ENCODE measurements at regions of chr4 and their contacts with region 1.

Region 1: DNA sequence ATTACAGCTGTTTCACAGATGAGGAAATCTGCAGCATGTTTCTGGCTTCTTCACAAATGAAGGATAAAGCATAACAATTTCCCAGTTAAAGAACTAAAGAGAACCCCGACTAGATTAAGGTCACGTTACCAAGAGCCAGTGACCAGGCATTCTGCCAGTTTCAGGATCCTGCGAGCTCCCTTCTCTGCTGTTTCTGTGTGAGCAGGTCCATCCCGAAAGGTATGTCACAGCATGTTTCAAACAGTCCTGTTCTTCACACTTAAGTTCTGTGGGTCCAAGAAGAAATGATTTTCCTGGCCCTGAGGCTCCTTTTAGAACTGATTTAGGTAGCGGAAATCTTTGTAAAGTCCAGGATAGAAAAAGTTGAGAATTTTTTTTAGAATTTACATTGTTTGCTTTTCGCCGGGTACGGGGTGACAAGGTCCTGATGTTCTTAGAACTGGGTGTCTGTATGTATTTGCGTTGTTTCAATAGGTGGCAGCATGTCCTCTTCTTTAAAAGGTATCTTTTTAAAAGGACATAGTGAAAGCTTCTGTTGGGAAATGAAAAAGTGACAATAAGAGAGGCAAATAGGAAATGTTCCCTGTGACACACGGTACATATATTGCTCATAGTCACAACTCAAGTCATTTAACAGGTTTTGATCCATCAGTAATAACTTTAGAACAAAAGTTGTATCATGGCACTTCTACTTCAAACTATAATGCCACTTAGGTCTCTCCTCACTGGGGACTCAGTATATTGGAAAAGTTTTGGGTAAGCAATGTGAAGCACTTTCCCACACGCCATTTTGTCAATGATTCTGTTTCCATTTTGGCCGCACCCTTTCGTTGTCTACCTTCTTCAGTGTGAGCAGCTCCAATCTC is 18.4 kb downstream of the IL21 start:
- DNase-seq: peak; percentile 44
- H3K4me3 Mint-ChIP-seq: peak overlapping the region; percentile 48
- H3K27ac Mint-ChIP-seq: peak overlapping the region; percentile 79
- H3K4me1 Mint-ChIP-seq: peaks cover 43% of the 10 kb centered on the region
- H3K27me3 Mint-ChIP-seq: no peaks in the 10 kb centered on the region

Region 2: DNA sequence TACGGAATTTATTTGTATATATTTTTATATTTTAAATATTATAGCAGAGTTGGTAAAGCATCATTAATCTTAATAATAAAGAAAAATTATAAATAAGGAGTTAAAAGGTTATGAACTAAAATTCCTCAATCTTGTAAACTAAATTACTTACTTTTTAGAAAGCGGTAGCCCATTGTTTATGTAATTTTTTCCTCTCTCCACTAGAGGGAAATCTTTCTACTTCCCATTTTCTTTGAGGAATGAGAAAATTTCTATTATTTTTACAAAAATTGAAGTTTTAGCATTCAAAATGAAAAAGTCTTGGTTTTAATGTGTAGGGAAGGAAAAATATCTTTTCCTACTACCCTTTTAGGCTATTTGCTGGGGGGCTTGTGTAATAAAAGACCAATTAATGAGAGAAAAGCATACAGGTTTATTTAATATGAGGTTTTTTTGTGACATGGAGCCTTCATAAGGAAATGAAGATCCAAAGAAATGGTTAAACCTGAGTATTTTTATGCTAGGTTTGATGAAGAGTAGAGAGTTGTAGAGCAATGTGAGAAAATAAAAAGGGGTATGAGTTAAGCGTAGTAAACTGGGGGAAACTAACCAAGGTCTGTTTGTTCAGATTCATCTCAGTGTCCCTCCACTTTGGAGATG is 292.4 kb before region 1 on chr4:
- CTCF ChIA-PET with region 1: no interaction called
- intact Hi-C with region 1: loop called (anchors 1 kb)
- DNase-seq: no peak
- H3K4me3 Mint-ChIP-seq: no peak overlapping the region
- H3K27ac Mint-ChIP-seq: peak overlapping the region; percentile 57
- H3K4me1 Mint-ChIP-seq: peaks cover 8% of the 10 kb centered on the region
- H3K27me3 Mint-ChIP-seq: no peaks in the 10 kb centered on the region

Region 3: DNA sequence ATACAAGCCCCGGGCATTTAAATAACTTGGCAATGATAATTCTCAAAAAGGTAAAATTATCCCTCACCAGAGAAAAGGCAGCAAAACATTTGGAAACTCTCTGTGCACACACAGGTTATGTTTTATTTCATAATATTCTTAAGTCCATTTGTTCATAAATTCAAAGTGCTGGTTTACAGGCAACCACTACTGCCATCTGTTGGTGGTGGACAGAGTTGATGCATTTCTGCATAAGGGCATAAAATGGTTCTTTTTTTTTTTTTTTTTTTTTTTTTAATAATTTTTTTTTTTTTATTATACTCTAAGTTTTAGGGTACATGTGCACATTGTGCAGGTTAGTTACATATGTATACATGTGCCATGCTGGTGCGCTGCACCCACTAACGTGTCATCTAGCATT is 49.9 kb after region 1 on chr4:
- CTCF ChIA-PET with region 1: interaction called, 29 read pairs
- intact Hi-C with region 1: loop called (anchors 5 kb)
- DNase-seq: peak; percentile 88
- H3K4me3 Mint-ChIP-seq: no peak overlapping the region
- H3K27ac Mint-ChIP-seq: peak overlapping the region; percentile 31
- H3K4me1 Mint-ChIP-seq: peaks cover 13% of the 10 kb centered on the region
- H3K27me3 Mint-ChIP-seq: no peaks in the 10 kb centered on the region

Region 4: DNA sequence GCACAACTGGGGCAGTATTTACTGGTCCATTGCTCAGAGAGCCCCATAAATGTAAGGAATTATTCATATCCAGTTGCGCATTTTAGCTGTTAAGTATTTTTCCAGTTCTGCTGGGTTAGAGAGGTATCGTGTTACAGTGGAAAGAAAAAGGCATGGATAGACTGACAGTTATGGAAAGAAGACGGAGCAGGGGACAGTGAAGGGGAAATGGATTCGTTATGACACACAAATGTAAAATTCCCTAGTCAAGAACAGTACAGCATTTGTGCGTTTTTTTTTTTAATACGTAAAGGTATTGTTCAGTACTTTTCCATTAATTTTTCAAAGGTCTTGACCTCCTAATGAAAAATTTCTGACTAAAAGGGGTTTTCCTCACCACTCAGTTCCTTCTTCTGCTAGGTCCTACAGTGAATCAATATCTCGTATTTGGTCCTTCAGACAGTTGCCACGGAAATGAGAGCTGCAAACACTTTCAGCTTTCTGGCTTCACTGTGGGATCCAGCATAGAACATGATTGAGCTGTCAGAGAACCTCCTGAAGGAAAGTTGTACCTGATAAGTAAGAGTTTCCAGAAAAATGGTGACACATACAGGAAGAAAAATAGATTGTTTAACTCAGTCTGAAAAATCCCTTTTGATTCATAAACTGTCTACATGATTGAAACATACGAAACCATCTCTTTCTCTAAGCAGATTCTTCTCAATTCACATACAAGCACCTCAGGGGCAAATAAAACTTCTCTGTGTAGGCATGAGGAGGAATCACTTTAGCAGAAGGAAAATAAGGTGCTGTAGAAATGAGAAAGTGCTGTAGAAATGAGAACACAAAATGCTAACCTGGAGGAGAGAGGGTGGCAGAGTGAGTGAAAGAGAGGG is 108.2 kb after region 1 on chr4:
- CTCF ChIA-PET with region 1: interaction called, 92 read pairs
- intact Hi-C with region 1: loop called (anchors 1 kb)
- DNase-seq: peak; percentile 79
- H3K4me3 Mint-ChIP-seq: peak overlapping the region; percentile 54
- H3K27ac Mint-ChIP-seq: peak overlapping the region; percentile 96
- H3K4me1 Mint-ChIP-seq: peaks cover 80% of the 10 kb centered on the region
- H3K27me3 Mint-ChIP-seq: no peaks in the 10 kb centered on the region

Region 5: GRCh38 chr4:122764821-122765215 is 162.3 kb after region 1 on chr4:
- CTCF ChIA-PET with region 1: no interaction called
- intact Hi-C with region 1: loop called (anchors 1 kb)
- DNase-seq: no peak
- H3K4me3 Mint-ChIP-seq: no peak overlapping the region
- H3K27ac Mint-ChIP-seq: peak overlapping the region; percentile 50
- H3K4me1 Mint-ChIP-seq: peaks cover 30% of the 10 kb centered on the region
- H3K27me3 Mint-ChIP-seq: no peaks in the 10 kb centered on the region

Region 6: DNA sequence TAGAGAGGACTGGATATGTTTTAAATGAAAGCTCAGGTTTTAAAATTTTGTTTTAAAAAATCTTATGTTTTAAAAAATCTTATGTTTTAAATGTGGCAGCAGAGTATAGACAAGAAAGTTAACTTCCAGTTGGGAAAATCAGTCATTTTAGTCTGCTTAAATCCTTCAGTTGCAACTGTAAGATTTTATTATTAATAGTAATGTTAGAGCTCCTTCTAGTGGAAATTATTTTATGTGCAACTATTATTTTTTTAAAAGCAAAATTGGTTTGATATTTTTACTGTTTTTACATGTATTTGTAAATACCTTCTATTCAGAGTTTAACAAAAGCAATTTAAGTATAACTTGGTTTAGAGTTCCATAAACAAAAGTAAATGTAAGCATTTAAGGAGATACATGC is 328.4 kb after region 1 on chr4:
- CTCF ChIA-PET with region 1: interaction called, 20 read pairs
- intact Hi-C with region 1: loop called (anchors 1 kb)
- DNase-seq: no peak
- H3K4me3 Mint-ChIP-seq: no peak overlapping the region
- H3K27ac Mint-ChIP-seq: no peak overlapping the region
- H3K4me1 Mint-ChIP-seq: peaks cover 4% of the 10 kb centered on the region
- H3K27me3 Mint-ChIP-seq: no peaks in the 10 kb centered on the region

Region 7: DNA sequence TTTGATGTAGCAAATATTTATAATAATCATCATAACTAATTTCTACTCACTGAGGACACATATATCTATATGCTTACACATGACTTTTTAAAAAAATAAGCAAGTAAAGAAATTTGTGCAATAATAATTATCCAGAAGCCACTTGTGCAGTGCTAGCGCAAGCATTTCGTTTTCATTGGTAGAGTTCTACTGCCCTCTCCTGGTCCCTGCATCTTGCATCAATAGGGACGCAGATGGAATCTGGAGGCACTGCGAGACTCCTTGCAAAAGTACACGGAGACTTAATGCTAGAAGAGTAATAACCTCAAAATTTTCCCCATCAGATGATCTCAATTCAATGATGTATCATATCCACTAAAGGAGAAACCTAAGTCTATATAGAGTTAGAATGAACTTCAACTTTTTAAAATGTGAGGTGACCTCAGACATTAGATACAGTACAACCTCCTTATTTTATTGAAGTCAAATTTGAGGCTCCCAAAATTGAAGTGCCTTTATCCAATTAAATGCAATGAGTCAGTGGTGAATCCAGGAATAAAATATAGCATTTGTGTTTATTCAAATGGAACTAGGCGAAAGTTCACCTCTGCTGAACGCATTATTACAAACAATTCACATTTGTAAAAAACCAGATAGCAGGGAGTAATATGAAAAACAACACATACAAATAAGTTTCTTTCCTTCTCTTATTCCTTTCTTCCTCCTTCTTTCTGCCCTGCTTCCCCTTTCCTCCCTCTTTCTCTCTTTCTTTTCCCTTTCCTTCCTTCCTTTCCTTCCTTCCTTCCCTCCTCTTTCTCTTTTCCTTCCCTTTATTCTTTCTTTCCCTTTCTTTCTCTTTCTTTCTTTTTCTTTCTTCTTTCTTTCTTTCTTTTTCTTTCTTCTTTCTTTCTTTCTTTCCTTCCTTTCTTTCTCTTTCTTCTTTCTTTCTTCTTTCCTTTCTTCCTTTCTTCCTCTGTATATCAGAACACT is 1660.0 kb after region 1 on chr4:
- CTCF ChIA-PET with region 1: no interaction called
- intact Hi-C with region 1: loop called (anchors 5 kb)
- DNase-seq: peak; percentile 71
- H3K4me3 Mint-ChIP-seq: no peak overlapping the region
- H3K27ac Mint-ChIP-seq: no peak overlapping the region
- H3K4me1 Mint-ChIP-seq: no peaks in the 10 kb centered on the region
- H3K27me3 Mint-ChIP-seq: peaks cover 4% of the 10 kb centered on the region

Measured in activated naive CD4-positive, alpha-beta T cell treated with anti-CD3 and anti-CD28 coated beads for 36 hours (primary cell).